Activated CD4-positive, alpha-beta memory T cell treated with anti-CD3 and anti-CD28 coated beads, Interleukin-2, amount 10 ng/mL, durations not matched to agents 7 days and 5 days (primary cell): ENCODE measurements at regions of chr17 and their contacts with region 1.

Region 1: GRCh38 chr17:80780381-80781198 is 211.1 kb upstream of the CHMP6 start:
- DNase-seq: peak; percentile 75
- H3K4me3 Mint-ChIP-seq: peak overlapping the region; percentile 54
- H3K27ac Mint-ChIP-seq: peak overlapping the region; percentile 95
- H3K4me1 Mint-ChIP-seq: peaks cover 83% of the 10 kb centered on the region
- H3K27me3 Mint-ChIP-seq: no peaks in the 10 kb centered on the region

Region 2: DNA sequence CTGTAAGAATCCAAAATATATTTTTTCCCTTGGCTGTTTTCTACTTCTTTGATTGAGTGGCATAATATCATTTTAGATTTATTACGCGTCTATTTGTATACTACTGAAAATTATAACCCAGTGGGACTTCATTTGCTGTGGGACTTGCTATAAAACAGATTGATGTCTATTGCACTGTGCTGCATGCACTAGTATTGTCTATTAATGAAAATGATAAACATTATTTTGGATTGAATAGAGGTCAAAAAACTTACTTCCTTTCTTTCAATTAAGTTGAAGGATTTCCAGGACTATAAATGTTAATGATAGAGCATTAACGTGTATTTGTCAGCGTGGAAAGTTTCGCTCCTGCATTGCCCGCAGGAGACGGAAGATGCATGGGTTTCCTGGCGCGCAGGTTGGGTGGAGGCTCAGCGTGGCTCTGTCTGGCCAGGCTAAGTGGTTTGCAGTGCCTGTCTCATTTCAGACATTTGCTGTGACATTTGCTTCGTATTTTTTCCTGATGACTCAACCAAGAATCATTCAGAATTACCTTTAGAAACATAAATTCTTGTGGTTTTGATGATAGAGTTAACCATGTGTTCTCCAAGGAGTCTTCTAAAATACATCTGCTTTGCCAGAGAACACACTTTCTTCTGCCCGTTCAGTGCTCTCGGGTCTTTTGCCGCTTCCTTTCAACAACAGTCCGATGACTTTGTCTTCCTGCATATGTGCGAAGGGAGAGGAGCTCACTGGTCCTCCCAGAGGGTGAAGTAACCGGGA is 19.3 kb before region 1 on chr17:
- CTCF ChIA-PET with region 1: interaction called, 7 read pairs
- POLR2A ChIA-PET with region 1: interaction called, 44 read pairs
- DNase-seq: peak; percentile 81
- H3K4me3 Mint-ChIP-seq: peak overlapping the region; percentile 63
- H3K27ac Mint-ChIP-seq: peak overlapping the region; percentile 98
- H3K4me1 Mint-ChIP-seq: peaks cover 79% of the 10 kb centered on the region
- H3K27me3 Mint-ChIP-seq: no peaks in the 10 kb centered on the region

Region 3: GRCh38 chr17:80811181-80812105 is 30.9 kb after region 1 on chr17:
- CTCF ChIA-PET with region 1: interaction called, 3 read pairs
- POLR2A ChIA-PET with region 1: interaction called, 15 read pairs
- DNase-seq: peak; percentile 64
- H3K4me3 Mint-ChIP-seq: peak overlapping the region; percentile 24
- H3K27ac Mint-ChIP-seq: peak overlapping the region; percentile 99
- H3K4me1 Mint-ChIP-seq: peaks cover 60% of the 10 kb centered on the region
- H3K27me3 Mint-ChIP-seq: no peaks in the 10 kb centered on the region

Region 4: GRCh38 chr17:80847496-80848230 is 67.1 kb after region 1 on chr17:
- CTCF ChIA-PET with region 1: interaction called, 5 read pairs
- POLR2A ChIA-PET with region 1: interaction called, 15 read pairs
- DNase-seq: peak; percentile 88
- H3K4me3 Mint-ChIP-seq: peak overlapping the region; percentile 6
- H3K27ac Mint-ChIP-seq: peak overlapping the region; percentile 96
- H3K4me1 Mint-ChIP-seq: peaks cover 77% of the 10 kb centered on the region
- H3K27me3 Mint-ChIP-seq: no peaks in the 10 kb centered on the region

Region 5: DNA sequence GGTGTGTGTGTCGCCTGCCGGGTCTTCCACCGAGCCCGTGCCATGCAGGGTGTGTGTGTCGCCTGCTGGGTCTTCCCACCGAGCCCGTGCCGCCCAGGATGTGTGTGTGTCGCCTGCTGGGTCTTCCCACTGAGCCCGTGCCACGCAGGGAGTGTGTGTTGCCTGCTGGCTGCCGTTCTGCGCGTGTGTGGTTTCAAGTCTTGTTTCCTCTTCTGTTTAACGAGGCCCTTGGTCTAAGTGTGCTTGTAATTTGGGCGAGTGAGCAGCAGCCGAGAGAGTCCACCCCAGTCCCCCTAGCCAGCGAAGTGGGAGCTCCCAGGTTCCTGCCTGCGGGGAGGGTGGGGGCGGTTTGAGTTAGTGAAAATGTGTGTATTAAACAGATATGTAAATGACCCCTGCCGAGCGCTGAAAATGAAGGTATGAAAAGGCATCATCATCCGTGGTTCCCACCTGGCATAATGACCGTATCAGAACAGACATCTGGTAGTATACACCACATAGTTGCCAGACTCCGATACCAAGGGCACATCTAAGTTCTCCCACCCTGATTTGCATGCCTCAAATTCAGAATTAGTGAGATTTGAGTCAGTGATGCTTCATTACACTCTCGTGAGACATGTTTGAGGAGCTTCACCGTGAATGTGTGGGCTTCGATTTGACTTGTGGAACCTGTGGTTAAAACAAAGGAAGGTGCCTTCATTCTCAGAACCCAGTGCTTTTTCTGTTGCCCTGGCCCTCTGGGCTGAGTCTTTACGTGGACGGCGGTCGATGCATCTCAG is 96.5 kb after region 1 on chr17:
- CTCF ChIA-PET with region 1: no interaction called
- POLR2A ChIA-PET with region 1: interaction called, 14 read pairs
- DNase-seq: peak; percentile 77
- H3K4me3 Mint-ChIP-seq: peak overlapping the region; percentile 72
- H3K27ac Mint-ChIP-seq: peak overlapping the region; percentile 100
- H3K4me1 Mint-ChIP-seq: peaks cover 68% of the 10 kb centered on the region
- H3K27me3 Mint-ChIP-seq: no peaks in the 10 kb centered on the region